ENCODE measurements at regions of chr14 and their contacts with region 1.

Region 1: GRCh38 chr14:20613094-20614037 is 22.2 kb upstream of the RNASE12 start:
- DNase-seq: peak; percentile 97
- ATAC-seq: peak; percentile 73
- H3K4me3 ChIP-seq: peak overlapping the region; percentile 49 to 80 (median 70)
- H3K4me3 Mint-ChIP-seq: no peak overlapping the region
- H3K27ac ChIP-seq: peak overlapping the region; percentile 67 to 76
- H3K27ac Mint-ChIP-seq: no peak overlapping the region
- H3K4me1 ChIP-seq: peaks cover 42 to 51% of the 10 kb centered on the region in 2 donors
- H3K4me1 Mint-ChIP-seq: peaks cover 9% of the 10 kb centered on the region
- H3K27me3 ChIP-seq: peaks cover 0 to 6% (median 0%) of the 10 kb centered on the region in 4 experiments
- H3K27me3 Mint-ChIP-seq: peaks cover 5% of the 10 kb centered on the region
- CTCF ChIP-seq: peak; percentile 51

Region 2: DNA sequence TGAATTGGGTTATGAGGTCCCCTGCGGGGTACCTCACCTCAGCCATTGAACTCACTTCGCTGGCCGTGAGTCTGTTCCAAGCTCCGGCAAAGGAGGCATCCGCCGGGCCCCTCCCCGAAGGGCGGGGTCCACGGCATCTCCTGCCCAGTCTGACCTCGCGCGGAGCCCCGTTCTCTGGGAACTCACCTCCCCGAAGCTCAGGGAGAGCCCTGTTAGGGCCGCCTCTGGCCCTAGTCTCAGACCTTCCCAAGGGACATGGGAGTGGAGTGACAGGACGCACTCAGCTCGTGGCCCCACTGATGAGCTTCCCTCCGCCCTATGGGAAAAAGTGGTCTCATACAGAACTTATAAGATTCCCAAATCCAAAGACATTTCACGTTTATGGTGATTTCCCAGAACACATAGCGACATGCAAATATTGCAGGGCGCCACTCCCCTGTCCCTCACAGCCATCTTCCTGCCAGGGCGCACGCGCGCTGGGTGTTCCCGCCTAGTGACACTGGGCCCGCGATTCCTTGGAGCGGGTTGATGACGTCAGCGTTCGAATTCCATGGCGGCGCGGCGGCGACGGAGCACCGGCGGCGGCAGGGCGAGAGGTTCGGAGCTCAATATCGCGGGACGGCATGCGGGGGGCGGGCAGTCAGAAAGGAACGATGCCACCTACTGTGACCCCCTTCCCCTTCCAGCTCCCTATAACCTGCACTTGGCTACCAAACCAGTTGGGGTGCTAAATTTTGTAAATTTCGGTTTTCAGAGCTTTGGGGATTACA is 270.1 kb before region 1 on chr14 and contains the start of gene PARP2:
- CTCF ChIA-PET with region 1: interaction called, 29 read pairs
- POLR2A ChIA-PET with region 1: interaction called, 10 read pairs
- intact Hi-C with region 1: loop called (anchors 1 kb)
- DNase-seq: peak; percentile 97
- ATAC-seq: peak; percentile 81
- H3K4me3 ChIP-seq: peak within 1 kb of the TSS; percentile 79 to 96 (median 88)
- H3K4me3 Mint-ChIP-seq: peak within 1 kb of the TSS; percentile 97
- H3K27ac ChIP-seq: peak within 1 kb of the TSS; percentile 85 to 93
- H3K27ac Mint-ChIP-seq: peak within 1 kb of the TSS; percentile 99
- H3K4me1 ChIP-seq: peaks cover 6 to 10% of the 10 kb centered on the region in 2 donors
- H3K4me1 Mint-ChIP-seq: peaks cover 15% of the 10 kb centered on the region
- H3K27me3 ChIP-seq: no peaks in the 10 kb centered on the region
- H3K27me3 Mint-ChIP-seq: no peaks in the 10 kb centered on the region
- CTCF ChIP-seq: peak; percentile 22
- total RNA-seq, gene PARP2: 17.4 and 22.4 TPM in 2 replicates

Region 3: DNA sequence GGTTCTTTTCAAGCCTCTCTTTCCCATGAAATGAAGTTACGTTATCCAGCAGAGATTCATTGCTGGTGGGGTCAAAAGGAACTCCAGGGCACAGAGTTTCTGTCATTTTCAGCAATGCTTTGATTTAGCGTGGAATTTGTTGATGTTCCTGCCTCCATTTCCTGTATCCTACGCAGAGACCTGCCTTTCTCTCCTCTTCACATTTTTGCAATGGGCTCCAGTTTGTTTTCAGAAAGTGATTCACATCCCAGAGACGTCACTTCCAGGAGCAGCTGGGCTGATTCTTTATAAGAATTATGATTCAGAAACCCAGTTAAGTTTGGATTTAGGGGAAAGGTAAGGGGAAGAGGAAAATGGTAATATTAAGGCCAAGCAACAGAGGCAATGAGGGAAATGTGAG is 96.5 kb before region 1 on chr14:
- CTCF ChIA-PET with region 1: no interaction called
- POLR2A ChIA-PET with region 1: no interaction called
- intact Hi-C with region 1: no loop called
- DNase-seq: no peak
- ATAC-seq: no peak
- H3K4me3 ChIP-seq: no peak overlapping the region
- H3K4me3 Mint-ChIP-seq: no peak overlapping the region
- H3K27ac ChIP-seq: no peak overlapping the region
- H3K27ac Mint-ChIP-seq: no peak overlapping the region
- H3K4me1 ChIP-seq: peaks cover 9% of the 10 kb centered on the region in 2 donors
- H3K4me1 Mint-ChIP-seq: peaks cover 12% of the 10 kb centered on the region
- H3K27me3 ChIP-seq: no peaks in the 10 kb centered on the region
- H3K27me3 Mint-ChIP-seq: no peaks in the 10 kb centered on the region
- CTCF ChIP-seq: no peak

Region 4: DNA sequence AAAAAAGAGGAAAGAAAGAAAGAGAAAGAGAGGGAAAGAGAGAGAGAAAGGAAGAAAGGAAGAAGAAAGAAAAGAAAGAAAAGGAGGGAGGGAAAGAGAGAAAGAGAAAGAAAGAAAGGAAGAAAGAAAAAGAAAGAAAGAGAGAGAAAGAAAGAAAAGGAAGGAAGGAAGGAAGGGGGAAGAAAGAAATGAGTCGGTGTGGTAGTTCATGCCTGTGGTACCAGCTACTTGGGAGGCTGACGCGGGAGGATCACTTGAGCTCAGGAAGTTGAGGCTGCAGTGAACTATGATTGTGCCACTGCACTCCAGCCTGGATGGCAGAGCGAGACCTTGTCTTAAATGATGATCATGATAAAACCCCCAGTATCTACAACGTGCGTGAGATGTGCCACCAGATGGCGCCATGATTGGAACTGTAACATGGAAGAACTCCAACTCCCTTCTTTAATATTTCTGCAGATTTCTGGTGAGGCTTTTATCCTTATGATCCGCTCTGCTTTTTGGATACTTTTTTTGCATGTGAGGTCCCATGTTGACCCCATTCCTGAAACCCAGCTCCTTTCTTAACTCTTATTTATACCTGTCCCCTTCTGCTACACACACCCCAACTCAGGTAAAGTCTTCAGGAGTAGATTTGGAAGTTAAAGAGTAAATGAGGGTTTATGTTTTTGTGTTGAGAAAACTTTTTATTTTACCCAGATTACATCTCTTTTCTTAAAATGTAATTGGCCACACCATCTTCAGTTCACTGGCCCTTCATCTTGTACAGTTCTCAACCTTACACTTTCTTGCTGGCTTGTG is 82.4 kb before region 1 on chr14:
- CTCF ChIA-PET with region 1: interaction called, 4 read pairs
- POLR2A ChIA-PET with region 1: no interaction called
- intact Hi-C with region 1: loop called (anchors 1 kb)
- DNase-seq: peak; percentile 78
- ATAC-seq: peak; percentile 65
- H3K4me3 ChIP-seq: no peak overlapping the region
- H3K4me3 Mint-ChIP-seq: no peak overlapping the region
- H3K27ac ChIP-seq: no peak overlapping the region
- H3K27ac Mint-ChIP-seq: peak overlapping the region; percentile 42
- H3K4me1 ChIP-seq: peaks cover 0 to 4% of the 10 kb centered on the region in 2 donors
- H3K4me1 Mint-ChIP-seq: peaks cover 9% of the 10 kb centered on the region
- H3K27me3 ChIP-seq: no peaks in the 10 kb centered on the region
- H3K27me3 Mint-ChIP-seq: peaks cover 9% of the 10 kb centered on the region
- CTCF ChIP-seq: peak; percentile 83

Region 5: GRCh38 chr14:20662968-20663732 is 49.8 kb after region 1 on chr14:
- CTCF ChIA-PET with region 1: interaction called, 10 read pairs
- POLR2A ChIA-PET with region 1: no interaction called
- intact Hi-C with region 1: loop called (anchors 1 kb)
- DNase-seq: peak; percentile 90
- ATAC-seq: peak; percentile 85
- H3K4me3 ChIP-seq: peak overlapping the region; percentile 30 to 93 (median 64)
- H3K4me3 Mint-ChIP-seq: peak overlapping the region; percentile 93
- H3K27ac ChIP-seq: peak overlapping the region in 1 of 2 donors; percentile 34
- H3K27ac Mint-ChIP-seq: peak overlapping the region; percentile 62
- H3K4me1 ChIP-seq: peaks cover 39 to 55% of the 10 kb centered on the region in 2 donors
- H3K4me1 Mint-ChIP-seq: peaks cover 53% of the 10 kb centered on the region
- H3K27me3 ChIP-seq: peaks cover 0 to 7% (median 0%) of the 10 kb centered on the region in 4 experiments
- H3K27me3 Mint-ChIP-seq: no peaks in the 10 kb centered on the region
- CTCF ChIP-seq: peak; percentile 71

Region 6: GRCh38 chr14:20782280-20782890 is 169.0 kb after region 1 on chr14:
- CTCF ChIA-PET with region 1: no interaction called
- POLR2A ChIA-PET with region 1: no interaction called
- intact Hi-C with region 1: loop called (anchors 5 kb)
- DNase-seq: peak; percentile 59
- ATAC-seq: peak; percentile 46
- H3K4me3 ChIP-seq: peak overlapping the region; percentile 65 to 90 (median 80)
- H3K4me3 Mint-ChIP-seq: peak overlapping the region; percentile 97
- H3K27ac ChIP-seq: peak overlapping the region; percentile 76 to 84
- H3K27ac Mint-ChIP-seq: peak overlapping the region; percentile 92
- H3K4me1 ChIP-seq: peaks cover 39 to 43% of the 10 kb centered on the region in 2 donors
- H3K4me1 Mint-ChIP-seq: peaks cover 53% of the 10 kb centered on the region
- H3K27me3 ChIP-seq: no peaks in the 10 kb centered on the region
- H3K27me3 Mint-ChIP-seq: no peaks in the 10 kb centered on the region
- CTCF ChIP-seq: no peak

Measured in B cell (primary cell).